Posterior cingulate gyrus (tissue), 11 donors: ENCODE measurements at regions of chr3 and their contacts with region 1.

Region 1: GRCh38 chr3:118884748-118885206 is 149.9 kb downstream of the IGSF11 start:
- DNase-seq: peak; percentile 52 to 97 (median 84)

Region 2: DNA sequence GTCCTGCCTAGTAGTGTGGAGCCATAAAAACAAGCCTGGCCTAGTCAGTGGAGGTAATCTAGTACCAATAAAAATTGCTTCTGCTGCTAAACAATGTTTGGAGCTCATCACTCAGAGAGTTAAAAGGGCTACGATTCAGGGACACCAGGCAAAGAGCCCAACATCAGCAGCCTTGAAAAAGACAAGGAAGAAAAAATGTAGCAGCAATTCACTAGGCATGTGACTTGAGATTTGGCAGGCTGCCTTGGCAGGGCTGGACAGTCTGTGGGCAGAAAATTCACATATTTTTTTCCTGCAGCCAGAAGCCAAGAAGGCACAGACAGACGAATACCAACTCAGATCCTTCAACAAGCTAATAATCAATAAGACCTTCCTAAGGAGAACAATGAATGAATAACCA is 102.7 kb after region 1 on chr3:
- intact Hi-C with region 1: loop called (anchors 5 kb)
- DNase-seq: peak; percentile 68 to 95 (median 86)

Region 3: DNA sequence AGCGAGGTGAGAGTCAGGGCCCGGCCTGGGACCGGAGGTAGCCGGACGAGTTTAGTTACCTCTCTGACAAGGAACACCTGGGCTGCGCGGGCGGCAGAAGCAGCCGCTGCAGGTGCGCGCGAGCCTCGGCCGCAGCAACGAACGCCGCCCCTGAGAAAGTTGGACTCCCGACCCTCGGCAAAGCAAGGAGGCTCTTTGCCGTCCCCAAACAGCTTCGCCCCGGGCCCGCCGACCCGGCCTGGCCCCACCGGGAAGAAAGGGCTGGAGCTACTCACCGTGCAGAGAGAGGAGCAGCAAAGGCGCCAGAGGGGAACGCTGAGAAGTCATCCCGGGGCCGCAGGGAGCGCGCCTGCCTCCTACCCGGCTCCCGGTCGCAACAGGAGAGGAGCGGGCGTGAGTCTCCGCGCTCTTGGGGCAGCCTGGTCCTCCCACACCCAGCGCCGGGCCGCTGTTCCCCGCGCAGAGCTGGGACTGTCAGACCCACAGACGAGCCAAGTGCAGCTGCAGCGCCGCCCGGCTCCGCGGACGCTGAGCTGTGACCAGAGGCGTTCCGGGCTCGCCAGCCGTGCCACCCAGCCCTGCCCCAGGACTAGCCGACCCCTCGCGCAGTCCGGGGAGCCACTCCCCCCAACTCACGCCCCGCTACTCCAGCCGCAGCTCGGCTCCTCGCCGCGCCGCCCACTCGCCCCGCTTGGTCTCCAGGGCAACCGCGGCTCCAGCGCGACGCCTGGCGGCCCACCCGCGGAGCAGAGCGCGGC is 149.7 kb after region 1 on chr3 and contains the start of gene IGSF11:
- intact Hi-C with region 1: loop called (anchors 1 kb)
- DNase-seq: peak; percentile 80 to 98 (median 88)

Region 4: DNA sequence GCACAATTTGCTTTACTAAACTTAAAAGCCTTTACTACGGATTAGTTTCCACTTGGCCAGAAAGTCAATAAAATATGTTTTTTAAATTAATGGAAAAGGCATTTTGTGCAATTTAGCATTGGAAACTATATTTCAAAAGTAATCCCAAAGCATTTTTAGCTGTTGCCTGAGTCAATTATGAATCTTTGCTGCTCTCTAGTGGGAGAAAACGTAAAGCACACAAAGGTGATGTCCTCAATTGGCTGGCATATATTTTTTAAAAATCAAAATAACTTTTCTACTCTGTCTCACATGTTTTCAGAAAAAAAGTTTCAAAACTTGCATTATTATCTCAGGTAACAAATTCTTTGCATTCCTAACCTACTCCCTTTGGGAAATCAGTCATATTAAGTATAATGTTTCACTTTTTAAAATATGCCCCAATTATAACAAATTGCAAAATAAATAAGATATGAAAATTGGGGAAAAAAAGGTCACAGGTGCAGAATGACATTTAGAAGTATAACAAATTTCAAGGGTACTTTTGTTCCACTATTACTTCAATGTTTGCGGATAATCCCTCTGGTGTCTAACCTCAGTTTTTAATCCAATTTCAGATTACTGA is 213.9 kb after region 1 on chr3:
- intact Hi-C with region 1: loop called (anchors 1 kb)
- DNase-seq: no peak

Region 5: GRCh38 chr3:119240591-119241434 is 356.0 kb after region 1 on chr3 and contains the start of gene B4GALT4:
- intact Hi-C with region 1: loop called (anchors 2 kb)
- DNase-seq: peak; percentile 66 to 98 (median 81)